GM12878 (cell line): ENCODE measurements at regions of chr7 and their contacts with region 1.

Region 1: DNA sequence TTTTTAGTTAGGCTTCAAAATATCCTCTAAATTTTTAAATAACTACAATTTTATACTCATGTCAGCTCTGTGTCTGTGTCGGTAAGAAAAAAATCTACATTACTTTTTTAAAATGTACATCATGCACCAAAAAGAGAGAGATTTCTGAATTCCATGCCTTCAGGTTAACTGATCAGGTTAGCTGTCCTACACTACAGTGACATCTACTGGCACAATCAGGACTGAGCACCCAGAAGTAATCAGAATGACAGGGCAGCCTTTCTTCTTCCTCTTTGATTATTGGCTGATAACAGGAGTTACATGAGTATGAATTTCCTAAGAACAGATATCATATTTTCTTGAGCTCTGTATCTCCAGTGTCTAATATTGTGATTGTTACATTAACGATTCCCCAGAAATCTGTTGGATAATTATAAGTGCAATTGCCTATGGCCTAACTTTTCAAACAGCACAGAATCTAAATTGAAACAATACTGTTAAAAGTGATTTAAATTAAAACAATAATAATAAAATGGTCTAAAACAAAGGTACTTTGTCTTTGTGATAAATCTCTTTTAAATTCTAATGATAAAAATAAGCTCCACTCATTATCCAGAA is 41.8 kb upstream of the HYCC1 start:
- DNase-seq: peak; percentile 60
- ATAC-seq: peak; percentile 99
- H3K4me3 ChIP-seq: no peak overlapping the region
- H3K27ac ChIP-seq: no peak overlapping the region
- H3K4me1 ChIP-seq: no peaks in the 10 kb centered on the region
- H3K27me3 ChIP-seq: no peaks in the 10 kb centered on the region
- CTCF ChIP-seq: peak; percentile 86 to 95 (median 94)
- EP300 ChIP-seq: no peak
- POLR2A ChIP-seq: no peak
- RAD21 ChIP-seq: peak; percentile 99

Region 2: GRCh38 chr7:22782616-22783232 is 273.0 kb before region 1 on chr7:
- CTCF ChIA-PET with region 1: interaction called, 71 read pairs
- POLR2A ChIA-PET with region 1: no interaction called
- RAD21 ChIA-PET with region 1: interaction called, 12 read pairs
- SMC1A ChIA-PET with region 1: interaction called, 36 read pairs
- in situ Hi-C with region 1: no loop called
- intact Hi-C with region 1: loop called (anchors 1 kb)
- DNase-seq: no peak
- ATAC-seq: peak; percentile 99
- H3K4me3 ChIP-seq: no peak overlapping the region
- H3K27ac ChIP-seq: no peak overlapping the region
- H3K4me1 ChIP-seq: no peaks in the 10 kb centered on the region
- H3K27me3 ChIP-seq: no peaks in the 10 kb centered on the region; a peak in 1 of 4 replicates
- CTCF ChIP-seq: peak; percentile 81 to 97 (median 97)
- EP300 ChIP-seq: no peak
- POLR2A ChIP-seq: no peak
- RAD21 ChIP-seq: peak; percentile 75

Region 3: GRCh38 chr7:22854158-22855048 is 201.3 kb before region 1 on chr7:
- CTCF ChIA-PET with region 1: interaction called, 40 read pairs
- POLR2A ChIA-PET with region 1: interaction called, 3 read pairs
- RAD21 ChIA-PET with region 1: interaction called, 46 read pairs
- SMC1A ChIA-PET with region 1: interaction called, 37 read pairs
- in situ Hi-C with region 1: no loop called
- intact Hi-C with region 1: loop called (anchors 2 kb)
- DNase-seq: peak; percentile 63
- ATAC-seq: peak; percentile 84
- H3K4me3 ChIP-seq: peak overlapping the region; percentile 84
- H3K27ac ChIP-seq: peak overlapping the region; percentile 94
- H3K4me1 ChIP-seq: peaks cover 14% of the 10 kb centered on the region
- H3K27me3 ChIP-seq: no peaks in the 10 kb centered on the region
- CTCF ChIP-seq: peak in 1 of 3 experiments; percentile 44; a peak in 1 of 6 replicates
- EP300 ChIP-seq: 0 out of 4 replicates have a peak, but pooled peaks of 1 of the 2 experiments have one; percentile 21
- POLR2A ChIP-seq: peak; percentile 89
- RAD21 ChIP-seq: no peak

Region 4: GRCh38 chr7:22885797-22886261 is 169.9 kb before region 1 on chr7:
- CTCF ChIA-PET with region 1: interaction called, 4 read pairs
- POLR2A ChIA-PET with region 1: interaction called, 4 read pairs
- RAD21 ChIA-PET with region 1: interaction called, 4 read pairs
- SMC1A ChIA-PET with region 1: interaction called, 13 read pairs
- in situ Hi-C with region 1: no loop called
- intact Hi-C with region 1: no loop called
- DNase-seq: peak; percentile 88
- ATAC-seq: peak; percentile 90
- H3K4me3 ChIP-seq: no peak overlapping the region; the same call in 1 of the 2 replicates
- H3K27ac ChIP-seq: peak overlapping the region; percentile 91
- H3K4me1 ChIP-seq: peaks cover 15% of the 10 kb centered on the region
- H3K27me3 ChIP-seq: no peaks in the 10 kb centered on the region
- CTCF ChIP-seq: no peak
- EP300 ChIP-seq: peak; percentile 51 to 70; a peak in 2 of 4 replicates
- POLR2A ChIP-seq: peak; percentile 50
- RAD21 ChIP-seq: no peak

Region 5: GRCh38 chr7:22980422-22980821 is 75.3 kb before region 1 on chr7:
- CTCF ChIA-PET with region 1: interaction called, 15 read pairs
- POLR2A ChIA-PET with region 1: no interaction called
- RAD21 ChIA-PET with region 1: interaction called, 5 read pairs
- SMC1A ChIA-PET with region 1: interaction called, 8 read pairs
- in situ Hi-C with region 1: no loop called
- intact Hi-C with region 1: no loop called
- DNase-seq: no peak
- ATAC-seq: no peak
- H3K4me3 ChIP-seq: no peak overlapping the region
- H3K27ac ChIP-seq: no peak overlapping the region
- H3K4me1 ChIP-seq: no peaks in the 10 kb centered on the region
- H3K27me3 ChIP-seq: no peaks in the 10 kb centered on the region
- CTCF ChIP-seq: no peak
- EP300 ChIP-seq: no peak
- POLR2A ChIP-seq: no peak
- RAD21 ChIP-seq: no peak

Region 6: DNA sequence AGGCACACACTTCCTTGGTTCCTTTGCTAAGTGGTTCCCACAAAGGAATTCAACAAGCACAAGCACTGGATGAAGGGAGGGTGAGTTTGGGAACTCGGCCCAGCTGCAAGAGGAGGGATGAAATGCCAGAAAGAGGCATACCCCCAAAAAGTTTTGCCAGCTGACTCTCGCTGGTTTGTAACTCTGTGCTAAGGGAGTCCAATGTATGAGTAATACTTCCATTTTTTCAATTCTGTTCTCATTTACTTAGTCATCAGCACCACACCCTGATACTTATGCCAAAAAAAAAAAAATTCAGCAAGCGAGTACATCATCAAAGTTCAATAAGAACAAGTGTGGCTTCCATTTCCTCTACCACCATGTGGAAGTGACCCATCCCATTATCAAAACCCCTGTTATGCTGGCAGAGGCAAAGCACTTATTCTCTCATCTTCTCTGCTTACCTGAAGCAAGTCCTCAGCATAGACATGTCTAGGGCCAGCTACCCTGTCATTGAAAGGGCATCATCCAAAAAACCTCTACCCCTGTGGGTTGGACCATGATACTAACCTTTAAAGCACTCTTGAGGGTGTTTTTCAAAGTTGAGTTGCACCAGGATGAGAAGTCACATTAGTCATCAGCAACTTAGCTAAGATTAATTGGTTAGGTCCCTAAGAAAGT is 34.8 kb before region 1 on chr7:
- CTCF ChIA-PET with region 1: interaction called, 23 read pairs
- POLR2A ChIA-PET with region 1: interaction called, 4 read pairs
- RAD21 ChIA-PET with region 1: interaction called, 8 read pairs
- SMC1A ChIA-PET with region 1: interaction called, 27 read pairs
- in situ Hi-C with region 1: no loop called
- intact Hi-C with region 1: no loop called
- DNase-seq: no peak
- ATAC-seq: peak; percentile 45
- H3K4me3 ChIP-seq: no peak overlapping the region
- H3K27ac ChIP-seq: no peak overlapping the region
- H3K4me1 ChIP-seq: peaks cover 11% of the 10 kb centered on the region
- H3K27me3 ChIP-seq: no peaks in the 10 kb centered on the region
- CTCF ChIP-seq: no peak
- EP300 ChIP-seq: no peak
- POLR2A ChIP-seq: no peak
- RAD21 ChIP-seq: no peak

Region 7: GRCh38 chr7:23074443-23075261 is 19.0 kb after region 1 on chr7:
- CTCF ChIA-PET with region 1: interaction called, 10 read pairs
- POLR2A ChIA-PET with region 1: no interaction called
- RAD21 ChIA-PET with region 1: no interaction called
- SMC1A ChIA-PET with region 1: interaction called, 8 read pairs
- in situ Hi-C with region 1: no loop called
- intact Hi-C with region 1: no loop called
- DNase-seq: no peak
- ATAC-seq: no peak
- H3K4me3 ChIP-seq: no peak overlapping the region
- H3K27ac ChIP-seq: no peak overlapping the region
- H3K4me1 ChIP-seq: no peaks in the 10 kb centered on the region
- H3K27me3 ChIP-seq: no peaks in the 10 kb centered on the region; a peak in 1 of 4 replicates
- CTCF ChIP-seq: no peak
- EP300 ChIP-seq: no peak
- POLR2A ChIP-seq: no peak
- RAD21 ChIP-seq: no peak

Region 8: GRCh38 chr7:23129036-23129435 is 73.4 kb after region 1 on chr7:
- CTCF ChIA-PET with region 1: no interaction called
- POLR2A ChIA-PET with region 1: no interaction called
- RAD21 ChIA-PET with region 1: no interaction called
- SMC1A ChIA-PET with region 1: no interaction called
- in situ Hi-C with region 1: no loop called
- intact Hi-C with region 1: no loop called
- DNase-seq: no peak
- ATAC-seq: no peak
- H3K4me3 ChIP-seq: no peak overlapping the region
- H3K27ac ChIP-seq: no peak overlapping the region
- H3K4me1 ChIP-seq: no peaks in the 10 kb centered on the region
- H3K27me3 ChIP-seq: no peaks in the 10 kb centered on the region
- CTCF ChIP-seq: no peak
- EP300 ChIP-seq: no peak
- POLR2A ChIP-seq: no peak
- RAD21 ChIP-seq: no peak